Endothelial cell of umbilical vein (primary cell): ENCODE measurements at regions of chrX and their contacts with region 1.

Region 1: DNA sequence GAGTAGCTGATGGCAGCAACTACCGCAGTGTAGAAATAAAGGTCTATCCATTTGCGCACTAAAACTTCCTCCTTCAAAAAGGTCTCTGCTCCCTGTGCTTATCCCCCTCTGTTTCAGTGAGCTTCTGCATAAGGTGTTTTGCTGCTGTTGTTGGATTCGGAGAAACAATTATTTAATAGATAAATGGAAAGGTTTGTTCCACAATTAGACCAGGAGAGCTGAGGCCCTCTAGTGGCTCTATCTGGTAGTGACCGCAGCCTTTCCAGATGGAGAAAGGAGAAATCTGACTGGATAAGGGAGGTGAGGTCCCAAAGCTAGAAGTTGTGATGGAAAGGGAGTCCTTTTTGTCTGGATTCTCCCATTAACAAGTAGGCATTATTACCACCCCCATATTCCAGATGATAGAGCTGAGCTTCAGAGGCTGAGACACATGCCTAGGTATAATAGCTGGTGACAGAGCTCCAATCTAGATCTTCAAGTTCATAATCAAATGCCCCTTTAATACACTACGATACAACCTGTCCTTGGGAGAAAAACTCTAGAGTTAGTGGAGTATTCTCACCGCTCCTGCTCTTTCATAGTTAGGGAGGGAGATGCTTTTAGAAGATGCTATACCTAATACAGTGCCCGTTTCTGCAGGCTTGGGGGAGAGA is 5.1 kb upstream of the GABRQ start:
- DNase-seq: peak; percentile 37
- H3K4me3 ChIP-seq: no peak overlapping the region
- H3K27ac ChIP-seq: no peak overlapping the region
- H3K4me1 ChIP-seq: no peaks in the 10 kb centered on the region
- H3K27me3 ChIP-seq: peaks cover 6 to 7% of the 10 kb centered on the region in 2 experiments
- CTCF ChIP-seq: peak; percentile 58 to 63
- POLR2A ChIP-seq: no peak

Region 2: GRCh38 chrX:151713859-151714258 is 918.7 kb before region 1 on chrX:
- CTCF ChIA-PET with region 1: interaction called, 4 read pairs
- POLR2A ChIA-PET with region 1: no interaction called
- dilution Hi-C with region 1: no loop called
- intact Hi-C with region 1: loop called (anchors 1 kb)
- DNase-seq: no peak
- H3K4me3 ChIP-seq: no peak overlapping the region
- H3K27ac ChIP-seq: no peak overlapping the region
- H3K4me1 ChIP-seq: no peaks in the 10 kb centered on the region
- H3K27me3 ChIP-seq: no peaks in the 10 kb centered on the region
- CTCF ChIP-seq: peak; percentile 27 to 47
- POLR2A ChIP-seq: no peak

Region 3: DNA sequence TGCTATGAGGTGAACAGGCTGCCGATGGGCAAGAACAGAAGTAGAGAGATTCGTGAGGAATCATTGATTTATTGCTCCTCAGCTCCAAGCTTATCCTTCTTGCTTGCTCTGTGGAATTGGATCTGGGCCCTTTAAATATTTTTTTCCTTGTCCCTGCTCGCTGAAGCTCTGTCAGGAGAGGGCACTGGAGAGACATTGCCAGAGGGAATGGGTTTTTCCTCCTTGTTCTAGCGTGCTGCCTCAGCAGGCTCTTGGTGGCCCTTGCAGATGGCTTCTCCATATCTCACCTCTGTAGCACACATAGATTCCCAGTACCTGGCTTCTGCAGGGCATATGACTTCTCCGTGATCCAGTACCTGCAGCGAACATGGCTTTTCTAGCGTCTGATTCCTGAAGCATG is 830.6 kb before region 1 on chrX:
- CTCF ChIA-PET with region 1: interaction called, 17 read pairs
- POLR2A ChIA-PET with region 1: no interaction called
- dilution Hi-C with region 1: no loop called
- intact Hi-C with region 1: loop called (anchors 2 kb)
- DNase-seq: peak; percentile 8
- H3K4me3 ChIP-seq: no peak overlapping the region
- H3K27ac ChIP-seq: no peak overlapping the region
- H3K4me1 ChIP-seq: no peaks in the 10 kb centered on the region
- H3K27me3 ChIP-seq: no peaks in the 10 kb centered on the region
- CTCF ChIP-seq: peak in 1 of 2 donors; percentile 22
- POLR2A ChIP-seq: no peak

Region 4: DNA sequence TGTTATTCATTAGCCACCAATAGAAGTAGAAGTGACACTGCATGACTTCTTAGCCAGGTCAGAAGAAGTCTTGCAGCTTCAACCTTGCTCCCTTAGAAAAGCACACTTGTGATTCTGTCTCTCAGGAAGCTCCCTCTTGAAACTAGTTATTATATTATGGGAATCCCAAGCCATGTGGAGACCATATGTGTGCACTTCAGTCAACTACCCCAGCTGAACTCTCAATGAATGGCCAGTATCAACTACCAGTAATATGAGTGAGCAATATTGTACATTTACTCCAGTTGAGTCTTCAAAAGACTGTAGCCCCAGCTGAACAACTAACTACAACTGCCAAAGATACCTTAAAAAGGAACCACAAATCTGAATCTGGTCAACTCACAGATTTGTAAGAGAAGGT is 104.4 kb before region 1 on chrX:
- CTCF ChIA-PET with region 1: no interaction called
- POLR2A ChIA-PET with region 1: no interaction called
- dilution Hi-C with region 1: no loop called
- intact Hi-C with region 1: no loop called
- DNase-seq: no peak
- H3K4me3 ChIP-seq: no peak overlapping the region
- H3K27ac ChIP-seq: no peak overlapping the region
- H3K4me1 ChIP-seq: no peaks in the 10 kb centered on the region
- H3K27me3 ChIP-seq: no peaks in the 10 kb centered on the region
- CTCF ChIP-seq: no peak
- POLR2A ChIP-seq: no peak

Region 5: DNA sequence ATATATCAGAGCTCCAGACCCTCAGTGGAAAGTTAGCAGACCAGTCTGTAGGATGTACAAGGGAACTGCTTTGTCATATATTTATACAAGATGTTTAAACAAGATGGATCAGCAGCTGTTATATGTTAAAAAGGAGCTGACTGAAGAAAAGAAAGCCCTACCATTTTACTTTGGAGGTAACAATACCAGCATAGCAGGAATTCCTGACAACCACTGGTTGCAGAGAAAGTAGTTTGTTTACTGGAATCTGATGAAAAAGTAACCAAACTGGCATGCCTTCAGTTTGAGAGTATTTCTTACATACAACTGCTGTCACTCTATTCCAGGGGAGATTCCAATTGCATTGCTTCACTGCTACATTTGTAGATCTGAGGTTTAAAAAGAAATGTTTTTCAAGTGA is 44.4 kb before region 1 on chrX:
- CTCF ChIA-PET with region 1: no interaction called
- POLR2A ChIA-PET with region 1: no interaction called
- dilution Hi-C with region 1: no loop called
- intact Hi-C with region 1: no loop called
- DNase-seq: no peak
- H3K4me3 ChIP-seq: no peak overlapping the region
- H3K27ac ChIP-seq: no peak overlapping the region
- H3K4me1 ChIP-seq: no peaks in the 10 kb centered on the region
- H3K27me3 ChIP-seq: no peaks in the 10 kb centered on the region
- CTCF ChIP-seq: no peak
- POLR2A ChIP-seq: no peak

Region 6: DNA sequence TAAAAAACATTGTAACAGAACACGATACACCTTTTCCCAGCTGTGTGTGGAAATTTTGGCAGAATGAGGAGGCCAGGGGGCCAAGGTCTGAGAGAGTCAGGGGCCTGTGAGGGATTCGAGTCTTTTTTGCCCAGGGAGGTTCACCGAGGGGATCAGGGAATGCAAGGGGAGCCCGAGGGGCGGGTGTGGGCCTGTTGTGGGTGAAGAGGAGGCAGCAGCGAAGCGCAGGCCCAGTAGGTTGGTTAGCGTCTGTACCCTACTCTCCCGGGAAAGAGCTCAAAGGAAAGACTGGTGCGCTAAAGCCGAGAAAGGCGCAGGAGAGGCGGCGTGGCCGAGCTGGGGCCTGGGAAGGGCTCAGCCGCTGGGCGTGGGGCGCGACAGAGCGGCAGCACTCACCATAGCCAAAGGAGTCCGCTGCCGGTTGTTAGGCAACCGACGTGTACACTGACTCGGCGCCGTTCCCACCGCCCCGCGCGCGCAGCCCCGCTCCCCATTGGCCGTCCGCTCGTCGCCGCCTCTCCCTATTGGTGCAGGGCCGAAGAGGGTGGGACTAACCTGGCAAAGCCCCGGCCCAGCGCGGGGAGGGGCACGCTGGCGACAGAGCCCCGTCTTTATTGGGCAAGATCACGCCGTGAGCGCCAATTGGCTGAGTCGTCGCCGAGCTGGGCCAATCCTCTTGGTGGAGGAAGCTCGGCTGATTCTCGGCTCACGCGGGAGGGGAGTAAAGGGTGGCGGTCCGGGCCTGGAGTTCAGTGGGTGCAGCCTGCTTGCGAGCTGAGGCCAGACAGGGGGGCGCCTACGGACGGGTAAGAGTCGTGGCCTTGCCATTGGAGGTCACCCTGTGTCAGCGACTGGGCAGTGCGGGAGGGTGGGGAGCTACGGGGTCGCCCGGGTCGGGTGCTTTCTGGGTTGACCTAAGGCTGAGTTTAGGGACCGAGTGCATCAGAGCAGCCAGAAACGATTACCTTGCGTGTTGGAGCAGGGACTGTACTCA is 198.0 kb after region 1 on chrX and contains the starts of genes CETN2 and NSDHL:
- CTCF ChIA-PET with region 1: no interaction called
- POLR2A ChIA-PET with region 1: no interaction called
- dilution Hi-C with region 1: no loop called
- intact Hi-C with region 1: no loop called
- DNase-seq: peak; percentile 97
- H3K4me3 ChIP-seq: peak within 1 kb of the TSS; percentile 79 to 87 (median 84)
- H3K27ac ChIP-seq: peak within 1 kb of the TSS; percentile 53
- H3K4me1 ChIP-seq: peaks cover 18% of the 10 kb centered on the region
- H3K27me3 ChIP-seq: no peaks in the 10 kb centered on the region
- CTCF ChIP-seq: no peak
- POLR2A ChIP-seq: peak; percentile 56
- total RNA-seq, gene CETN2: 28.2 and 28.6 TPM in 2 replicates
- total RNA-seq, gene NSDHL: 40.0 and 43.4 TPM in 2 replicates